ENCODE measurements at regions of chr2 and their contacts with region 1.

Region 1: DNA sequence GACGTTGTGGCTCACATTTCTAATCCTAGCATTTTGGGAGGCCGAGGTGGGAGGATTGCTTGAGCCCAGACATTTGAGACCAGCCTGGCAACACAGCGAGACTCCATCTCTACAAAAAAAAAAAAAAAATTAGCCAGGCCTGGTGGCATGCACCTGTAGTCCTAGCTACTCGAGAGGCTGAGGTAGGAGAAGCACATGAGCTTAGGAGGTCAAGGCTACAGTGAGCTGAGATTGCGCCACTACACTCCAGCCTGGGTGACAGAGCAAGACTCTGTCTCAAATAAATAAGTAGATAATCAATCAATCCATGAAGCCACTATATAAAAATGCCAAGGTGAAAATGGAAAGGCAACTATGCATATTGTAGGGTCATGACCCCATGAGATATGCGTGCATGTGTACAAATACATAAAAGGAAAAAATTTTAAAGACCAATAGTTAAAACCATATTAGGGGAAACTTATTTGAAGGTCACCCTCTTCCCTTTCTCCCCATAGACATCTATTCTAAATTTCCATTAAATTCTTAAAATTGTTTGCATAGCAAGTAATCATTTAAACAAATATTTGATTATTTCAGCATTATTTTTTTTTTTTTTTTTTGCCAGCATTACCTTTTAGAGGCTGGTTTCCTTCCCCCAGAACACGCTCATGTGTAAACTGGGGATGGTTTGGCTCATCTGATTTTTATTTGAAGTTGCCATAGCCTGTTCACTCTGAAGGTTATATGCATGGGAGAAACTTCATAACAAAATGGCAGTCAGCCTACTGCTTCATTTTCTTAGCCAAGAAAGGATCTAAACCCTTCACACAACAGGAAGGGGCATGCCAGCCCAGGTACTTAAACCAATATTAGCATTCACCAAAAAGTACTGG is 37.3 kb upstream of the TMEM247 start:
- DNase-seq: no peak
- H3K4me3 ChIP-seq: no peak overlapping the region
- H3K27ac ChIP-seq: no peak overlapping the region
- H3K4me1 ChIP-seq: peaks cover 4% of the 10 kb centered on the region
- H3K27me3 ChIP-seq: no peaks in the 10 kb centered on the region
- CTCF ChIP-seq: no peak

Region 2: GRCh38 chr2:46409753-46410152 is 32.3 kb before region 1 on chr2:
- CTCF ChIA-PET with region 1: no interaction called
- dilution Hi-C with region 1: loop called (anchors 5 kb)
- in situ Hi-C with region 1: no loop called
- intact Hi-C with region 1: no loop called
- DNase-seq: no peak
- H3K4me3 ChIP-seq: no peak overlapping the region
- H3K27ac ChIP-seq: peak overlapping the region; percentile 33
- H3K4me1 ChIP-seq: peaks cover 44% of the 10 kb centered on the region
- H3K27me3 ChIP-seq: no peaks in the 10 kb centered on the region
- CTCF ChIP-seq: no peak

Region 3: GRCh38 chr2:46470114-46470628 is 28.1 kb after region 1 on chr2:
- CTCF ChIA-PET with region 1: no interaction called
- dilution Hi-C with region 1: no loop called
- in situ Hi-C with region 1: no loop called
- intact Hi-C with region 1: no loop called
- DNase-seq: no peak
- H3K4me3 ChIP-seq: no peak overlapping the region
- H3K27ac ChIP-seq: no peak overlapping the region
- H3K4me1 ChIP-seq: peaks cover 9% of the 10 kb centered on the region
- H3K27me3 ChIP-seq: no peaks in the 10 kb centered on the region
- CTCF ChIP-seq: no peak

Measured in mammary epithelial cell (primary cell).